ENCODE measurements at regions of chr6 and their contacts with region 1.

Region 1: GRCh38 chr6:17754254-17754653 is 47.5 kb upstream of the NUP153 start:
- DNase-seq: no peak
- ATAC-seq: no peak
- H3K4me3 ChIP-seq: no peak overlapping the region
- H3K27ac ChIP-seq: no peak overlapping the region
- H3K4me1 ChIP-seq: no peaks in the 10 kb centered on the region
- H3K27me3 ChIP-seq: no peaks in the 10 kb centered on the region
- CTCF ChIP-seq: no peak

Region 2: GRCh38 chr6:17721729-17722128 is 32.5 kb before region 1 on chr6:
- CTCF ChIA-PET with region 1: interaction called, 12 read pairs
- POLR2A ChIA-PET with region 1: no interaction called
- intact Hi-C with region 1: no loop called
- DNase-seq: no peak
- ATAC-seq: no peak
- H3K4me3 ChIP-seq: no peak overlapping the region
- H3K27ac ChIP-seq: no peak overlapping the region
- H3K4me1 ChIP-seq: no peaks in the 10 kb centered on the region
- H3K27me3 ChIP-seq: no peaks in the 10 kb centered on the region
- CTCF ChIP-seq: no peak

Region 3: DNA sequence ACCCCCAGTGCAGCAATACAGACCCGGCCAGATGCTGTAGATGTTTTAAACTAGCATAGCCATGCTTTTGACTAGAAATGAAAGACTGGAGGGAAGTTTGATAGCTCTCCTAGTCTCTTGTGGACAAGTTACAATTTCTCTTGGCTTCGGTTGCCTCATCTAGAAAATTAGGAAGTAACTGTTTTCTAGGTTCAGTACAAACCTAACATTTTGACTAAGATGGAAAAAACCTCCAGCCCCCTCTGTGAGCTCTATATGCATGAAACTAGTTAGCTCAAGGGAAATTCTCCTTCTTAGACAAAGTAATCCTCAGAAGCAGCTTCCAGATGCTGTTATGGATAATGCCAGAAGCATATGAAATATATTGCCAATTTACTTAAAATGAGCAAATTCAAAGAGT is 719.5 kb after region 1 on chr6:
- CTCF ChIA-PET with region 1: no interaction called
- POLR2A ChIA-PET with region 1: no interaction called
- intact Hi-C with region 1: no loop called
- DNase-seq: no peak
- ATAC-seq: no peak
- H3K4me3 ChIP-seq: no peak overlapping the region
- H3K27ac ChIP-seq: no peak overlapping the region
- H3K4me1 ChIP-seq: no peaks in the 10 kb centered on the region
- H3K27me3 ChIP-seq: no peaks in the 10 kb centered on the region
- CTCF ChIP-seq: no peak